Activated CD4-positive, alpha-beta memory T cell treated with anti-CD3 and anti-CD28 coated beads, Interleukin-2, amount 10 ng/mL, durations not matched to agents 7 days and 5 days (primary cell): ENCODE measurements at regions of chr17 and their contacts with region 1.

Region 1: GRCh38 chr17:59892924-59893676 is at the starts of genes RPS6KB1 and TUBD1:
- DNase-seq: peak; percentile 98
- H3K4me3 Mint-ChIP-seq: peak within 1 kb of the TSS; percentile 100
- H3K27ac Mint-ChIP-seq: peak within 1 kb of the TSS; percentile 96
- H3K4me1 Mint-ChIP-seq: peaks cover 56% of the 10 kb centered on the region
- H3K27me3 Mint-ChIP-seq: no peaks in the 10 kb centered on the region
- total RNA-seq, gene RPS6KB1: 44.3 to 50.1 TPM
- total RNA-seq, gene TUBD1: 11.4 to 11.7 TPM

Region 2: GRCh38 chr17:59707114-59707970 is 185.8 kb before region 1 on chr17 and contains the starts of genes PTRH2 and VMP1:
- CTCF ChIA-PET with region 1: no interaction called
- POLR2A ChIA-PET with region 1: interaction called, 21 read pairs
- DNase-seq: peak; percentile 95
- H3K4me3 Mint-ChIP-seq: peak within 1 kb of the TSS; percentile 98
- H3K27ac Mint-ChIP-seq: peak within 1 kb of the TSS; percentile 91
- H3K4me1 Mint-ChIP-seq: peaks cover 50% of the 10 kb centered on the region
- H3K27me3 Mint-ChIP-seq: no peaks in the 10 kb centered on the region
- total RNA-seq, gene PTRH2: 22.8 to 23.3 TPM
- total RNA-seq, gene VMP1: 398 to 408 TPM

Region 3: DNA sequence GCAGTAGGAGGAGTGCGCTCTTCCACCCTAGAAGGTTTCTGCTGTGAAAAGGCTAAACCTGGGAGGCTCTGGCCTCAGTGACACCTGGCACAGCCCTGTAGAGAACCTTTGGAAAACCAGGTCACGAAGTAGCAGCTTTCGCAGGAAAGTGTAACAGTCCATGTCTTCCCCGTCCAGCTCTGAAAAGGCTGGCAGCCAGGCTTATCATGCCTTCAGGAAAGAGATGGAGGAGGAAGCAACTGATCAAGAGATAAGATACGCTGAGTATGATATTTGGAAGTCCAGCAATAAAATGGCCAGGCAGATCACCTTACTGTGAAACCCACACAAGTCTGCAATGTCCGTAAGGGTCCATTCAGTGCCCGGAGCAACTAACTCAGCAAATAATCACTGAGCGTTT is 22.6 kb before region 1 on chr17:
- CTCF ChIA-PET with region 1: no interaction called
- POLR2A ChIA-PET with region 1: interaction called, 13 read pairs
- DNase-seq: no peak
- H3K4me3 Mint-ChIP-seq: no peak overlapping the region
- H3K27ac Mint-ChIP-seq: no peak overlapping the region
- H3K4me1 Mint-ChIP-seq: no peaks in the 10 kb centered on the region
- H3K27me3 Mint-ChIP-seq: no peaks in the 10 kb centered on the region

Region 4: GRCh38 chr17:59964482-59965328 is 71.6 kb after region 1 on chr17 and contains the start of gene RNFT1:
- CTCF ChIA-PET with region 1: no interaction called
- POLR2A ChIA-PET with region 1: interaction called, 12 read pairs
- DNase-seq: peak; percentile 91
- H3K4me3 Mint-ChIP-seq: peak within 1 kb of the TSS; percentile 77
- H3K27ac Mint-ChIP-seq: peak within 1 kb of the TSS; percentile 75
- H3K4me1 Mint-ChIP-seq: peaks cover 19% of the 10 kb centered on the region
- H3K27me3 Mint-ChIP-seq: peaks cover 2% of the 10 kb centered on the region
- total RNA-seq, gene RNFT1: 20.5 to 21.3 TPM